RWPE1 (cell line): ENCODE measurements at regions of chr5 and their contacts with region 1.

Region 1: GRCh38 chr5:127508644-127509373 is 8.6 kb upstream of the PRRC1 start:
- DNase-seq: no peak
- H3K27ac ChIP-seq: no peak overlapping the region
- CTCF ChIP-seq: no peak

Region 2: GRCh38 chr5:127492854-127493738 is 15.7 kb before region 1 on chr5:
- CTCF ChIA-PET with region 1: interaction called, 13 read pairs
- POLR2A ChIA-PET with region 1: no interaction called
- DNase-seq: peak; percentile 55
- H3K27ac ChIP-seq: no peak overlapping the region
- CTCF ChIP-seq: peak; percentile 92

Region 3: GRCh38 chr5:127969002-127969401 is 460.2 kb after region 1 on chr5:
- CTCF ChIA-PET with region 1: no interaction called
- POLR2A ChIA-PET with region 1: no interaction called
- DNase-seq: no peak
- H3K27ac ChIP-seq: no peak overlapping the region
- CTCF ChIP-seq: no peak